Activated naive CD8-positive, alpha-beta T cell treated with anti-CD3 and anti-CD28 coated beads, Interleukin-2, amount 10 ng/mL, durations not matched to agents 7 days and 5 days (primary cell): ENCODE measurements at regions of chr10 and their contacts with region 1.

Region 1: GRCh38 chr10:110803830-110804338 is 67.8 kb upstream of the PDCD4 start:
- DNase-seq: peak; percentile 42
- ATAC-seq: peak; percentile 74
- H3K4me3 Mint-ChIP-seq: peak overlapping the region; percentile 46
- H3K27ac Mint-ChIP-seq: peak overlapping the region; percentile 80
- H3K4me1 Mint-ChIP-seq: peaks cover 35% of the 10 kb centered on the region
- H3K27me3 Mint-ChIP-seq: no peaks in the 10 kb centered on the region

Region 2: GRCh38 chr10:110864662-110865140 is 60.8 kb after region 1 on chr10:
- POLR2A ChIA-PET with region 1: interaction called, 13 read pairs
- DNase-seq: no peak
- ATAC-seq: peak; percentile 62
- H3K4me3 Mint-ChIP-seq: peak overlapping the region; percentile 83
- H3K27ac Mint-ChIP-seq: peak overlapping the region; percentile 97
- H3K4me1 Mint-ChIP-seq: peaks cover 88% of the 10 kb centered on the region
- H3K27me3 Mint-ChIP-seq: no peaks in the 10 kb centered on the region

Region 3: DNA sequence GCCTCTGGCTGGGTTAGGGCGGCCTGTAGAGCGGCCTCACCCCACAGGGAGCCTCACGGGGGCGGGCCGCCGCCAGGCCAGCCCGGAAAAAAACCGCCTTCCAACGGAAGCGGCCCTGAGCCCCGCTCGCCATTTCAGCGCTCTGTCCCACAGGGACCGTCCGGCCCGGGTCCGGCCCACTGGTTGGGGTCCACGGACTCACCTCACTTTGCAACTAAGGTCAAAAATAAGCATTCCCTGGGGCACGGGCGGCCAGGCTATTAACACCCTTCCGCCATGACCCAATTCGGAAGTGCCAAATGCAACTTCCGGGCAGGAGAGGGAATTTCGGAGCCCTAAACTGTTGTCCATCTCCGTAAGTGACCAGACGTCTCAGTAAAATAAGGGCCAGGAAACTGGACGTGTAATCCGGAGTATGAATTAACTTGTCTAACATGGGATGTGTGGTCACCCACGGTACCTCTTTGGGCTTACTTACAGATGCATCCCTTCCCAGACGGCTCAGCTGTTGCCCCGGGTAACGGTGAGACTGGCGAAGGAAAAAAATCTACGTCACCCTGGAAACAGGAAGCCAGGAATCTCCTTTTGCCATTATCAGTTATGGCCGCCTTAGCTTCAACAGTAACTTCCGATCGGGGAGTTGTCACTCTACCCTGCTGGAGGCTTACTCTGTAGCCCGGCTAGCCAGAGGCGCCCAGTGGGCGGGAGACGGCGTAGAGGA is 114.9 kb after region 1 on chr10 and contains the start of gene BBIP1:
- POLR2A ChIA-PET with region 1: interaction called, 17 read pairs
- DNase-seq: peak; percentile 91
- ATAC-seq: peak; percentile 94
- H3K4me3 Mint-ChIP-seq: peak within 1 kb of the TSS; percentile 96
- H3K27ac Mint-ChIP-seq: peak within 1 kb of the TSS; percentile 97
- H3K4me1 Mint-ChIP-seq: peaks cover 27% of the 10 kb centered on the region
- H3K27me3 Mint-ChIP-seq: no peaks in the 10 kb centered on the region
- total RNA-seq, gene BBIP1: 33.0 to 33.8 TPM